ENCODE measurements at regions of chr3 and their contacts with region 1.

Region 1: DNA sequence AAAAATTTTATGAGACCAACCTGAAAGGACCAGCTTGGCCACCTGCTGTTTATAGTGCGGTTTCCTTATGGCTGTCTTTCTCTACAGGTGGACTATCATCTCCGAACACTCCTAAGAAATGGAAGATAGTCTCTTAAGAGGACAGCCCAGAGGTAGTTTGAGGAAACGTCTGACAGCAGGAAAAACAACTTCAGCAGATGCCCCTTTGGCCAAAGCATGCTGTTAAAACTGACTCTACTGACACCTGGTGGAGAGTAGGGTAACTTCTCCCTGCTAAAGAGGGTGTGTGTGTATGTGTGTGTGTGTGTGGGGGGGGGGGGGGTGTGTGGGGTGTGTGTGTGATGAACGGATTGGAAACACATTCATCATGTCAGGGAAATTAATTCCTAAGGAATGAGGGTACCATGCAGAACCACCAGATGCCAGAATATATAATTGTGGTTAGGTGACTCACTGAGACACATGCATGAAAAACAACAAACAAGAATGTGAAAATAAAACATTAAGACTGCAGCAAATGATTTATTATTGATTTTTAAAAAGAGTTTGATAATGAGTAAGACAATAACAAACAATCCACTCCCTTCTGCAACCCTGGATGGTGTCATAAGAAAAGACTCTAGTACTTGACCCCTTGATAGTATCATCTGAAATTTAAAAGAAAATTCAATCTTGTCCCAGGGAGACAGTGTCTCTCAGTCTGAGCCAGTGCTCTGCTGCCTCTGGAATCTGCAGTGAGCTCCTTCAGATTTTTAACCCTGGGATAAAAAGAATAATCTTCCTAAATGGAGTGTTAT is 256.5 kb downstream of the THRB start:
- DNase-seq: peak; percentile 33 to 50 (median 39)
- H3K4me3 ChIP-seq: no peak overlapping the region
- H3K4me3 Mint-ChIP-seq: no peak overlapping the region
- H3K27ac ChIP-seq: no peak overlapping the region
- H3K27ac Mint-ChIP-seq: no peak overlapping the region
- H3K4me1 ChIP-seq: no peaks in the 10 kb centered on the region
- H3K4me1 Mint-ChIP-seq: no peaks in the 10 kb centered on the region
- H3K27me3 ChIP-seq: no peaks in the 10 kb centered on the region
- H3K27me3 Mint-ChIP-seq: peaks cover 0 to 11% (median 3%) of the 10 kb centered on the region in 3 donors
- CTCF ChIP-seq: peak; percentile 46

Region 2: GRCh38 chr3:23888617-23889228 is 349.4 kb before region 1 on chr3:
- intact Hi-C with region 1: loop called (anchors 5 kb)
- DNase-seq: peak; percentile 26 to 55 (median 43)
- H3K4me3 ChIP-seq: no peak overlapping the region
- H3K4me3 Mint-ChIP-seq: peak overlapping the region in 1 of 2 donors; percentile 39
- H3K27ac ChIP-seq: peak overlapping the region in 1 of 2 donors; percentile 54
- H3K27ac Mint-ChIP-seq: peak overlapping the region; percentile 9 to 85 (median 79)
- H3K4me1 ChIP-seq: peaks cover 7 to 11% of the 10 kb centered on the region in 2 donors
- H3K4me1 Mint-ChIP-seq: peaks cover 17% of the 10 kb centered on the region
- H3K27me3 ChIP-seq: no peaks in the 10 kb centered on the region
- H3K27me3 Mint-ChIP-seq: peaks cover 0 to 3% (median 0%) of the 10 kb centered on the region in 3 donors
- CTCF ChIP-seq: peak; percentile 93

Region 3: GRCh38 chr3:23999012-23999641 is 239.0 kb before region 1 on chr3:
- intact Hi-C with region 1: loop called (anchors 5 kb)
- DNase-seq: peak; percentile 23 to 37 (median 34)
- H3K4me3 ChIP-seq: no peak overlapping the region
- H3K4me3 Mint-ChIP-seq: no peak overlapping the region
- H3K27ac ChIP-seq: no peak overlapping the region
- H3K27ac Mint-ChIP-seq: no peak overlapping the region
- H3K4me1 ChIP-seq: no peaks in the 10 kb centered on the region
- H3K4me1 Mint-ChIP-seq: peaks cover 4% of the 10 kb centered on the region
- H3K27me3 ChIP-seq: no peaks in the 10 kb centered on the region
- H3K27me3 Mint-ChIP-seq: peaks cover 0 to 6% (median 0%) of the 10 kb centered on the region in 3 donors
- CTCF ChIP-seq: peak; percentile 88

Region 4: GRCh38 chr3:24323272-24323671 is 85.1 kb after region 1 on chr3:
- intact Hi-C with region 1: no loop called
- DNase-seq: no peak
- H3K4me3 ChIP-seq: no peak overlapping the region
- H3K4me3 Mint-ChIP-seq: no peak overlapping the region
- H3K27ac ChIP-seq: no peak overlapping the region
- H3K27ac Mint-ChIP-seq: no peak overlapping the region
- H3K4me1 ChIP-seq: no peaks in the 10 kb centered on the region
- H3K4me1 Mint-ChIP-seq: no peaks in the 10 kb centered on the region
- H3K27me3 ChIP-seq: no peaks in the 10 kb centered on the region
- H3K27me3 Mint-ChIP-seq: no peaks in the 10 kb centered on the region
- CTCF ChIP-seq: no peak